ENCODE measurements at regions of chrX and their contacts with region 1.

Region 1: GRCh38 chrX:48021026-48021900 is 14.5 kb downstream of the SPACA5 start:
- DNase-seq: no peak
- H3K4me3 ChIP-seq: peak overlapping the region; percentile 52 to 67 (median 60)
- H3K27ac ChIP-seq: peak overlapping the region; percentile 80 to 87 (median 84)
- H3K4me1 ChIP-seq: peaks cover 0 to 10% (median 5%) of the 10 kb centered on the region in 4 donors
- H3K27me3 ChIP-seq: no peaks in the 10 kb centered on the region
- CTCF ChIP-seq: no peak
- EP300 ChIP-seq: no peak
- POLR2A ChIP-seq: no peak

Region 2: DNA sequence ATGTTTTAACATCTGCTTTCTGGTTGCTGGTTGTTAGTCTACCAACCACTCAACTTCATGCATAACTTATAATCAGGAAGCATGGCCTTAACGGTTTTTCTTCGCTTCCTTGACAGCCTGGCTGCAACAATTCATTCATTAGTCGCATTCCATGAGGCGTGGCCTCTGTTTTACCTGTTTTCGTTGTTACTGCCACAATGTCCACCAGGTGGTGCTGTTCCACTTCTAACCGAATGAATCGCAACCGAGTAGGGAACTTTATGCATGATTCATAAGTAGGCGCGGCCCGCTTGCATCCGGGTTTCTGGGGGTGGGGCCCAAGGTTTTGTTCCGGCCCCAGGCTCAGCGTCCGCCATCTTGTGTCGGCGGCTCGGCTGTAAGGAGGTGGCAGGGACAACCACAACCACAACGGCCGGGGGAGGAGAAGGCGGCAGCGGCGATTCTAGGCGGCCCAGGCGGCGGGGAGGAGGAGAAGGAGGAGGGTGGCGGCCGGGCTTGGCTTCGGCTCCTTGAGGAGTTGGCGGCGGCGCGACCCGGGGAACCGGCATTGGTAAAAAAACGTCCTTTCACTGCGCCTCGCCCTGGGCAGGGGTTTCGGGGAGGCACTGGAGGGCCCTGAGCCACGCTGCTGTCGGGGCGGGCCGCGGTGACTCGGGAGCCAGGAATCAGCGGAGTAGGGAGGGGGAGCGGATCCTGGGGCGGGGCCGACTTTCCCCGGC is 827.6 kb before region 1 on chrX and contains the start of gene UBA1:
- intact Hi-C with region 1: loop called (anchors 10 kb)
- DNase-seq: peak; percentile 97
- H3K4me3 ChIP-seq: peak within 1 kb of the TSS; percentile 72 to 95 (median 80)
- H3K27ac ChIP-seq: peak within 1 kb of the TSS; percentile 92 to 97 (median 96)
- H3K4me1 ChIP-seq: peaks cover 50 to 71% (median 57%) of the 10 kb centered on the region in 4 donors
- H3K27me3 ChIP-seq: no peaks in the 10 kb centered on the region
- CTCF ChIP-seq: peak; percentile 59 to 95 (median 93)
- EP300 ChIP-seq: no peak
- POLR2A ChIP-seq: peak; percentile 45
- total RNA-seq, gene UBA1: 125 to 218 (median 147) TPM

Region 3: GRCh38 chrX:47644557-47645091 is 376.6 kb before region 1 on chrX:
- intact Hi-C with region 1: loop called (anchors 10 kb)
- DNase-seq: no peak
- H3K4me3 ChIP-seq: no peak overlapping the region
- H3K27ac ChIP-seq: no peak overlapping the region
- H3K4me1 ChIP-seq: peaks cover 6 to 30% (median 20%) of the 10 kb centered on the region in 4 donors
- H3K27me3 ChIP-seq: peaks cover 0 to 6% (median 0%) of the 10 kb centered on the region in 4 donors
- CTCF ChIP-seq: peak in 2 of 3 experiments; percentile 26 to 34
- EP300 ChIP-seq: no peak
- POLR2A ChIP-seq: no peak

Region 4: DNA sequence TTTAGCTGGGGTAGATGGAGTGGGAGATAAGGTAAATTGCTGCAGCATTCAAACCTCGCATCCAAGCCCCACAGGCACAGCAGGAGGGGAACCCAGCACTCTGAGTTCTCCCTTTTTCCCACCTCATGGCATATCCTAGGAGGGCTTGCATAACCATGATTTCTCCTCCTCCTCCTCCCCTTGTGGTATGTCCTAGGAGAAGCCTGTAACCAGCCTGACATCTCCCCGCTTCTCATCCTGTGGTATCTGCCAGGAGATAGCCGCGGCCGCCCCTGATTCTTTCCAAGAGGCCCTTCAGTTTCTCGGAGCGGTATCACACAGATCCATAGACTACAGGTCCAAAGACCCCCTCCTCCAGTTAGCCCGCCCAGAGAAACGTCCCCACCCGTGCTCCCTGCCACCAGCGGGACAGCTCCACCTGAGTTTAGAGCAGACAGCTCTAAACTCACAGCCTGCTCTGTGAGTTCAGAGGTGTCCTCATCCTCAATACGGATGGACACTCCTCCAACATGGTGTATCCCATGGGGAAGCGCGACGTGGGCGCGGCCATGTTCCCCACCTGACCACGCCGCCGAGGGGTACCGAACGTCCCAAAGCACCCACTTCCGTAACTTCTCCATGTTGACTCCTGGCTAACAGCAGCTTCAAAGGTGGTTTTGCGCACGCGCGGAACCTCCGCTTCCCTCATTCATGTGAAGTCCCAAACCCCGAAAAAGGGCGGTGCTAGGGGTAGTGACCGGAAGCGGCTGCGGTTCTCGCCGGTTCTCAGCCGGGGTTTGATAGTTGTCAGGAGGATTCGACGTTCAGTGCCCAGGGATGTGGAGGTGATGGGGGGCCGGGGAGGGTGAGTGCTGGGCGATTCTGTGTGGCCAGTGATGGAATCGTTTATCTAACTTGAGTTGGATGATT is 184.8 kb before region 1 on chrX and contains the start of gene ZNF81:
- intact Hi-C with region 1: loop called (anchors 2 kb)
- DNase-seq: peak; percentile 97
- H3K4me3 ChIP-seq: peak within 1 kb of the TSS; percentile 53 to 69 (median 56)
- H3K27ac ChIP-seq: peak within 1 kb of the TSS; percentile 71 to 80 (median 74)
- H3K4me1 ChIP-seq: peaks cover 0 to 14% (median 6%) of the 10 kb centered on the region in 4 donors
- H3K27me3 ChIP-seq: no peaks in the 10 kb centered on the region
- CTCF ChIP-seq: no peak
- EP300 ChIP-seq: no peak
- POLR2A ChIP-seq: no peak
- total RNA-seq, gene ZNF81: 4.8 to 12.6 (median 5.5) TPM

Region 5: DNA sequence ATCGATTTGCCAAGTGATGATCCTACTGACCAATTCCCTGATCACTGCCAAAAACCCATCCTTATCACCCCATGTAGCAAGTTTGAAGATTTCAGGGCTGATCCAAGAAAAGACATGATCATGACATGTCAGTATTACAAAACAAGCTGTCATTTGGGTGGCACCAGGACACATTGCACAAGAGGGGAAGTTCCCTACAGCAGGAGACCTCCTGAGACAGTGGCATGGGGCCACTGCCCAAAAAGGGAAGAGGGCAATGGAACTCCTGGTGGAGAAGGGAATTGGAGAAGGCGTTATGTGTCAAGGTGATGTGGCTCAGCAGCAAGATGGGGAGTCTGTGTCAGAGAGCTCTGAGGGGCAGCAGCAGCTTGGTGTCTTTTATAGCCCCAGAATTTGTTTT is 60.9 kb before region 1 on chrX:
- intact Hi-C with region 1: loop called (anchors 10 kb)
- DNase-seq: no peak
- H3K4me3 ChIP-seq: no peak overlapping the region
- H3K27ac ChIP-seq: no peak overlapping the region
- H3K4me1 ChIP-seq: no peaks in the 10 kb centered on the region
- H3K27me3 ChIP-seq: no peaks in the 10 kb centered on the region
- CTCF ChIP-seq: no peak
- EP300 ChIP-seq: no peak
- POLR2A ChIP-seq: no peak